Naive thymus-derived CD8-positive, alpha-beta T cell (primary cell): ENCODE measurements at regions of chr1 and their contacts with region 1.

Region 1: GRCh38 chr1:161098210-161099068 is at the start of gene KLHDC9:
- DNase-seq: peak; percentile 33 to 79 (median 60)
- ATAC-seq: peak; percentile 71 to 78
- H3K4me3 Mint-ChIP-seq: peak within 1 kb of the TSS; percentile 83 to 96 (median 92)
- H3K27ac Mint-ChIP-seq: peak within 1 kb of the TSS; percentile 83 to 100 (median 88)
- H3K4me1 Mint-ChIP-seq: peaks cover 16 to 29% (median 25%) of the 10 kb centered on the region in 4 donors
- H3K27me3 Mint-ChIP-seq: peaks cover 0 to 4% (median 0%) of the 10 kb centered on the region in 5 donors
- polyA plus RNA-seq, gene KLHDC9: 0.30 to 1.5 (median 0.62) TPM

Region 2: DNA sequence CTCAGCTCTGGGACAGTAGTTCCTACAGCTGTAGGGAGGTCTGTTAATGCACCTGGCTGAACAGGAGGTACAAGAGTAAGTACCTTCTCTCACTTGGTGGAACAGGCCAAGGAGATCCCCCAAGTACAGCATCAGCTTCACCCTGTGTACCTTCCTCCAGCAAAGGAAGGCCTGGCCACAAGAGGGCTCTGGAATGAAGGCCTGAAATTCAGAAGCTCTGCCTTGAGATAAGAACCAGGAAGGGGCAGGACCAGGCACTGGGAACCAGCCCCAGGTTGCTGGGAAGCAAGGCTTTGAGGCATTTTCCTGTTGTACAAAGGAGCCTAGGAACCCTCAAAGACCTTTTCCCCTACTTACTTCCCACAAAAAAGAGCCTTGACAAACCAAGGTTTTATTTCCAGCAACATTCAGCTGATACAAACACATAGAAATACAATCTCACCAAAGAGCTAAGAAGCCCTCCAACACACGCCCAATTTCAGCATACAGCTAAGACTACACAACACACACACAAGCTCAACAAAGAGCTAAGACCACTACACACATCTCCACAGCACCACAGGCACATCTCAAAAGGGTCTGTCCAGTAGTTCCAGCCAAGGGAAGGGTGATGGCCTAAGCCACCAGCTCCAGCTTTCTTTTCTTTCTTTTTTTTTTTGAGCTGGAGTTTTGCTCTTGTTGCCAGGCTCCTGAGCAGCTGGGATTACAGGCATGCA is 101.0 kb before region 1 on chr1:
- POLR2A ChIA-PET with region 1: interaction called, 31 read pairs
- DNase-seq: peak; percentile 15 to 78 (median 39)
- ATAC-seq: peak; percentile 76 to 94
- H3K4me3 Mint-ChIP-seq: no peak overlapping the region
- H3K27ac Mint-ChIP-seq: peak overlapping the region in 9 of 10 donors; percentile 3 to 83 (median 54)
- H3K4me1 Mint-ChIP-seq: peaks cover 5 to 9% (median 6%) of the 10 kb centered on the region in 4 donors
- H3K27me3 Mint-ChIP-seq: no peaks in the 10 kb centered on the region

Region 3: GRCh38 chr1:161021165-161021960 is 77.1 kb before region 1 on chr1:
- POLR2A ChIA-PET with region 1: interaction called, 12 read pairs
- DNase-seq: peak; percentile 78 to 95 (median 90)
- ATAC-seq: peak; percentile 94 to 97
- H3K4me3 Mint-ChIP-seq: peak overlapping the region; percentile 85 to 97 (median 90)
- H3K27ac Mint-ChIP-seq: peak overlapping the region; percentile 62 to 98 (median 94)
- H3K4me1 Mint-ChIP-seq: peaks cover 28 to 51% (median 45%) of the 10 kb centered on the region in 4 donors
- H3K27me3 Mint-ChIP-seq: peaks cover 0 to 2% (median 0%) of the 10 kb centered on the region in 5 donors

Region 4: GRCh38 chr1:161117759-161118581 is 19.5 kb after region 1 on chr1 and contains the starts of genes NIT1 and PFDN2:
- POLR2A ChIA-PET with region 1: interaction called, 18 read pairs
- DNase-seq: peak; percentile 76 to 88 (median 83)
- ATAC-seq: peak; percentile 82 to 86
- H3K4me3 Mint-ChIP-seq: peak within 1 kb of the TSS; percentile 91 to 97 (median 95)
- H3K27ac Mint-ChIP-seq: peak within 1 kb of the TSS; percentile 77 to 98 (median 95)
- H3K4me1 Mint-ChIP-seq: peaks cover 36 to 90% (median 68%) of the 10 kb centered on the region in 4 donors
- H3K27me3 Mint-ChIP-seq: no peaks in the 10 kb centered on the region
- polyA plus RNA-seq, gene NIT1: 16.8 to 25.0 (median 18.3) TPM
- polyA plus RNA-seq, gene PFDN2: 74.6 to 91.3 (median 86.0) TPM

Region 5: DNA sequence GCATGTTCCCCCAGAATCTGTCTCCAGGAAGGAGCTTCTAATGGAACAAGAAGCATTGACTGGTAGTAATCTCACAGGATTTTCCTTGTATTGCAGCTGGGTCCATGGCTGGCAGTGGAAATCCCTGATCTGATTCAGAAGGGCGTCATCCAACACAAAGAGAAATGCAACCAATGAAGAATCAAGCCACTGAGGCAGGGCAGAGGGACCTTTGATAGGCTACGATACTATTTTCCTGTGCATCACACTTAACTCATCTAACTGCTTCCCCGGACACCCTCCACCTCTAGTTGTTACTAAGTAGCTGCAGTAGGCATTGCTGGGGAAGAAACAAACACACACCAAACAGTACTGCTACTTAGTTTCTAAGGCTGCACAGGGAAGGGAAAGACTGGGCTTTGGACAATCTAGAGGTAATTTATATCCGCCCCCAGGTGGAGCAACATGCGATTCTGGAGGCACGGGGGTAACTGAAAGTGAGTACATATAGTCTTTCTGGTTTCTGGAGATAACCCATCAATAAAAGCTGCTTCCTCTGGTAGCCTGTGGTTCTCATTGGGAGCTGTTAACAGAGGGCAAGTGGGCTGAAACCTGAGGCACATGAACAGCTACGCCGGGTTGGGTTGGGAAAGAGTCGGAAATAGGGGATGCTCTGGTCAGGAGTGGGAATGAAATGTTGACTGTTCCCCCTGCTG is 60.0 kb after region 1 on chr1:
- POLR2A ChIA-PET with region 1: no interaction called
- DNase-seq: no peak
- ATAC-seq: no peak
- H3K4me3 Mint-ChIP-seq: peak overlapping the region; percentile 88 to 97 (median 93)
- H3K27ac Mint-ChIP-seq: peak overlapping the region; percentile 89 to 97 (median 96)
- H3K4me1 Mint-ChIP-seq: peaks cover 38 to 80% (median 68%) of the 10 kb centered on the region in 4 donors
- H3K27me3 Mint-ChIP-seq: peaks cover 0 to 1% (median 0%) of the 10 kb centered on the region in 5 donors

Region 6: GRCh38 chr1:161172349-161172748 is 73.9 kb after region 1 on chr1:
- POLR2A ChIA-PET with region 1: no interaction called
- DNase-seq: no peak
- ATAC-seq: no peak
- H3K4me3 Mint-ChIP-seq: no peak overlapping the region
- H3K27ac Mint-ChIP-seq: peak overlapping the region in 9 of 10 donors; percentile 10 to 93 (median 61)
- H3K4me1 Mint-ChIP-seq: peaks cover 33 to 71% (median 52%) of the 10 kb centered on the region in 4 donors
- H3K27me3 Mint-ChIP-seq: no peaks in the 10 kb centered on the region

Region 7: DNA sequence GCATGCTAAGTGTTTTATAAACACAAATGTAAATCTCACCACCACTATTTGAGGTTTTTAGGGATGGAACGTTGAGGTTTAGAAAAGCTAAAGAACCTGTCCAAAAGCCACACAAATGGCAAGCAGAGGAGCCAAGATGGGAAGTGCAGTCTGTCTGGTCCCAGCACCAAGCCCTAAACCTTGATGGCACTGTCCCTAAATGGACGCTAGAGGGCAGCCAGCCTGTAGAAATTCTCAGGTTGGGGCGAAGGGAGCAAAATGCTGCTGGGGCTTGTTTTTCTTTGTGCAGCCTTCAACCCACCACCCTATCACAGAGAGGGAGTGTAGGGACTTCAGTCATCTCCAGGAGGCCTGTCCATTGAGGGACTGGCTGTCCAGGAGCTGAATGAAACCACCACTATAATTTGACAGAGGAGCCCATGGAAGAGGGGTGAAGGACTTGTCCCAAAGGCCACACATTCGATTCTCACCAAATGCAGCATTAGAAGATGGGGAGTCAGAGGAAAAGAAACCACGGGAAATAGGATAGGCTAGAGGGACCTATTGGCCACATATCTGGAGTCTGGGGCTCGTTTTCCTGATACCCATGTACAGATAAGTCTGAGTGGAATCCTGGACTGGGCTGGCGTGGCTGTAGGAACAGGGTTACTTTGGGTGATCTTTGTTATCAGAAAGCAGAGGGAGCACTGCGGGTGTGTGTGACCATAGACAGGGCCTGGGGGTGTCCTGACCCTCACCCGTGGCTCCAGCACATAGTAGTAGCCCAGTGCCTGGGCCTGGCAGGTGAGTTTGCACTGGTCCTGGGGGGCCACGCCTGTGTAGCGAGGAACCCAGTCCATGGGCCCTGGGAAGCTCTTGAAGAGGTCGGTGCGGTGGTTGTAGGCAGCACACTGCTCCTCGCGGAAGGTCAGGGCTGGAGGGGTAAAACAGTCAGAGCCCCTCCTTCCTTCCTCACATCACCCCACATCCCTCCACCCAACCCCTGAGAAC is 94.3 kb after region 1 on chr1:
- POLR2A ChIA-PET with region 1: no interaction called
- DNase-seq: peak; percentile 38 to 86 (median 66)
- ATAC-seq: peak; percentile 97
- H3K4me3 Mint-ChIP-seq: peak overlapping the region in 6 of 10 donors; percentile 44 to 68 (median 54)
- H3K27ac Mint-ChIP-seq: peak overlapping the region; percentile 67 to 97 (median 91)
- H3K4me1 Mint-ChIP-seq: peaks cover 10 to 64% (median 47%) of the 10 kb centered on the region in 4 donors
- H3K27me3 Mint-ChIP-seq: no peaks in the 10 kb centered on the region

Region 8: GRCh38 chr1:161335796-161336195 is 237.4 kb after region 1 on chr1:
- POLR2A ChIA-PET with region 1: no interaction called
- DNase-seq: no peak
- ATAC-seq: no peak
- H3K4me3 Mint-ChIP-seq: no peak overlapping the region
- H3K27ac Mint-ChIP-seq: peak overlapping the region in 1 of 10 donors; percentile 31
- H3K4me1 Mint-ChIP-seq: peaks cover 0 to 5% (median 2%) of the 10 kb centered on the region in 4 donors
- H3K27me3 Mint-ChIP-seq: no peaks in the 10 kb centered on the region